ENCODE measurements at regions of chr1 and their contacts with region 1.

Region 1: GRCh38 chr1:109483672-109484518 is at the start of gene ATXN7L2:
- DNase-seq: peak; percentile 96
- ATAC-seq: peak; percentile 77
- H3K4me3 ChIP-seq: peak within 1 kb of the TSS; percentile 51 to 82 (median 74)
- H3K4me3 Mint-ChIP-seq: peak within 1 kb of the TSS; percentile 96
- H3K27ac ChIP-seq: peak within 1 kb of the TSS; percentile 92 to 95
- H3K27ac Mint-ChIP-seq: peak within 1 kb of the TSS; percentile 88
- H3K4me1 ChIP-seq: peaks cover 12 to 23% of the 10 kb centered on the region in 2 donors
- H3K4me1 Mint-ChIP-seq: peaks cover 28% of the 10 kb centered on the region
- H3K27me3 ChIP-seq: peaks cover 0 to 15% (median 5%) of the 10 kb centered on the region in 4 experiments
- H3K27me3 Mint-ChIP-seq: peaks cover 20% of the 10 kb centered on the region
- CTCF ChIP-seq: no peak
- total RNA-seq, gene ATXN7L2: 10.1 and 10.9 TPM in 2 replicates

Region 2: DNA sequence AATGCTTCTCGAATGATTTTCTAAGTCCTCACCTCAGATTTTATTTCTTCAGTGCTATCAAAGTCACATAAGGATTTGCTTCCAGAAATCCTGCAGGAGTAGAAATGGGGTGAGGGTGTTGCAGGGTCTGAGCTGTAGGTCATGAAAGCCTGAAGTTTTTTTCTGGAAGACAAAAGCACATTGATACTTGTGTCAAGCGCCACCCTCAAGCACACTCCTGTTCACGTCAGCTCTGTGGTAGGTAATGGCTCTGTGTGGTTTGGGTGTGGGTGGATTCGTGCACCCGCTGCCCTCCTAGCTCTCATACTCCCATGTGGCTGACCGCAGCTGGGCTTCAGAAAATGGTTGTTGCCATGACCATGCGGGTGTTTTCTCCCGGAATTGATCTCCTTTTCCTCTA is 666.9 kb before region 1 on chr1:
- CTCF ChIA-PET with region 1: no interaction called
- POLR2A ChIA-PET with region 1: no interaction called
- intact Hi-C with region 1: no loop called
- DNase-seq: no peak
- ATAC-seq: no peak
- H3K4me3 ChIP-seq: peak overlapping the region in 1 of 5 experiments; percentile 29
- H3K4me3 Mint-ChIP-seq: no peak overlapping the region
- H3K27ac ChIP-seq: no peak overlapping the region
- H3K27ac Mint-ChIP-seq: no peak overlapping the region
- H3K4me1 ChIP-seq: no peaks in the 10 kb centered on the region
- H3K4me1 Mint-ChIP-seq: no peaks in the 10 kb centered on the region
- H3K27me3 ChIP-seq: no peaks in the 10 kb centered on the region
- H3K27me3 Mint-ChIP-seq: no peaks in the 10 kb centered on the region
- CTCF ChIP-seq: no peak

Region 3: DNA sequence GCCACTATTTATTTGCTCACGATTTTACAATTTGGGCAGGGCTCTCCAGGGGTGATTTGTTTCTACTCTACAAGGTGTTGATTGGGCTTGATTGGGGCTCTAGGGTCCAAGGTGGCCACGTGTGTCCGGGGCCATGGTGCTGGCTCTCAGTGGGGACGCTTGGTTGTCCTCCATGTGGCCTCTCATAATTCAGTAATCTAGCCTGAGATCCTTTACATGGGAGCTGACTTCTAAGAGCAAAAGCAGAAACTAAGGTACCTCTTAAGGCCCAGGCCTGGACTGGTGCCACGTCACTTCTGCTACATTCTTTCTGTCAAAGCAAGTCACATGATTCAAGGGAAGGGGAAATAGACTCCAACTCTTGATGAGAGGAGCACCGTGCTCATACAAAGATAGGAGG is 192.9 kb before region 1 on chr1:
- CTCF ChIA-PET with region 1: no interaction called
- POLR2A ChIA-PET with region 1: no interaction called
- intact Hi-C with region 1: no loop called
- DNase-seq: peak; percentile 37
- ATAC-seq: no peak
- H3K4me3 ChIP-seq: no peak overlapping the region
- H3K4me3 Mint-ChIP-seq: no peak overlapping the region
- H3K27ac ChIP-seq: no peak overlapping the region
- H3K27ac Mint-ChIP-seq: no peak overlapping the region
- H3K4me1 ChIP-seq: peaks cover 20 to 28% of the 10 kb centered on the region in 2 donors
- H3K4me1 Mint-ChIP-seq: peaks cover 28% of the 10 kb centered on the region
- H3K27me3 ChIP-seq: no peaks in the 10 kb centered on the region
- H3K27me3 Mint-ChIP-seq: peaks cover 4% of the 10 kb centered on the region
- CTCF ChIP-seq: no peak

Region 4: DNA sequence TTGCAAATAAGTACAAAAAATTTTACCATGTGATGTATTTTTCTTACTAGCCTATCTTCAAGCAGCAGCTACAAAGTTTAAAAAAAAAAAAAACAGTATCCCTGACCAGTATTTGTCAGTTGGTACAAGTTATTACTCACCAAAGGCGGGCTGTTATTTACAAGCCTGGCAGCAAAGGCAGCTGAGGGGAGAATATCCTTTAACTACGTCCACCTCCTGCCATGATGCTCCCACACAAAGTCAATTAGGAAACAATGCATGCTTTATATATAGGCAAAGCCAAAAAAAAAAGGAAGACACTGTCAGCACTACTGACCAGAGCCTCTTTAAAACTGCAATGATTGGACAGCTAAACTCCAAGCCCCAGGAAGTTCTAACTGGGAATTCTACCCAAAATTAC is 71.3 kb before region 1 on chr1:
- CTCF ChIA-PET with region 1: no interaction called
- POLR2A ChIA-PET with region 1: no interaction called
- intact Hi-C with region 1: no loop called
- DNase-seq: no peak
- ATAC-seq: no peak
- H3K4me3 ChIP-seq: no peak overlapping the region
- H3K4me3 Mint-ChIP-seq: no peak overlapping the region
- H3K27ac ChIP-seq: no peak overlapping the region
- H3K27ac Mint-ChIP-seq: no peak overlapping the region
- H3K4me1 ChIP-seq: no peaks in the 10 kb centered on the region
- H3K4me1 Mint-ChIP-seq: peaks cover 2% of the 10 kb centered on the region
- H3K27me3 ChIP-seq: no peaks in the 10 kb centered on the region
- H3K27me3 Mint-ChIP-seq: no peaks in the 10 kb centered on the region
- CTCF ChIP-seq: no peak

Region 5: GRCh38 chr1:109509176-109510134 is 25.6 kb after region 1 on chr1 and contains the start of gene AMIGO1:
- CTCF ChIA-PET with region 1: no interaction called
- POLR2A ChIA-PET with region 1: interaction called, 6 read pairs
- intact Hi-C with region 1: loop called (anchors 1 kb)
- DNase-seq: peak; percentile 81
- ATAC-seq: peak; percentile 84
- H3K4me3 ChIP-seq: peak within 1 kb of the TSS; percentile 49 to 64 (median 62)
- H3K4me3 Mint-ChIP-seq: peak within 1 kb of the TSS; percentile 92
- H3K27ac ChIP-seq: no peak within 1 kb of the TSS
- H3K27ac Mint-ChIP-seq: peak within 1 kb of the TSS; percentile 37
- H3K4me1 ChIP-seq: peaks cover 11 to 15% of the 10 kb centered on the region in 2 donors
- H3K4me1 Mint-ChIP-seq: peaks cover 18% of the 10 kb centered on the region
- H3K27me3 ChIP-seq: peaks cover 0 to 9% (median 5%) of the 10 kb centered on the region in 4 experiments
- H3K27me3 Mint-ChIP-seq: peaks cover 37% of the 10 kb centered on the region
- CTCF ChIP-seq: no peak
- total RNA-seq, gene AMIGO1: 2.4 and 2.6 TPM in 2 replicates

Region 6: DNA sequence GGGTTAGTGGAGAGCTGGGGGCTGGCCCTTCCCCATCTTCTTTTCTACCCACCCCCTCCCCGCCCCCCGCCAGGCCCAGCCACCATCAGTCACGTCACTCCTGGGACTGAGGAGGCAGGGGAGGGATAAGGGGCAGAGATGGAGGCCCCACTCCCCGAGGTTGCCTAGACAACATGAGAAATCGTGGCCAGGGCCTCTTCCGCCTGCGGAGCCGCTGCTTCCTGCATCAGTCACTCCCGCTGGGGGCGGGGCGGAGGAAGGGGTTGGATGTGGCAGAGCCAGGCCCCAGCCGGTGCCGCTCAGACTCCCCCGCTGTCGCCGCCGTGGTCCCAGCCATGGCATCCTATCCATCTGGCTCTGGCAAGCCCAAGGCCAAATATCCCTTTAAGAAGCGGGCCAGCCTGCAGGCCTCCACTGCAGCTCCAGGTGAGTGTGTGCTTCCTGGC is 137.0 kb after region 1 on chr1:
- CTCF ChIA-PET with region 1: no interaction called
- POLR2A ChIA-PET with region 1: no interaction called
- intact Hi-C with region 1: loop called (anchors 5 kb)
- DNase-seq: peak; percentile 86
- ATAC-seq: peak; percentile 59
- H3K4me3 ChIP-seq: peak overlapping the region; percentile 65 to 94 (median 84)
- H3K4me3 Mint-ChIP-seq: peak overlapping the region; percentile 99
- H3K27ac ChIP-seq: peak overlapping the region; percentile 64 to 90
- H3K27ac Mint-ChIP-seq: peak overlapping the region; percentile 96
- H3K4me1 ChIP-seq: peaks cover 50 to 65% of the 10 kb centered on the region in 2 donors
- H3K4me1 Mint-ChIP-seq: peaks cover 72% of the 10 kb centered on the region
- H3K27me3 ChIP-seq: no peaks in the 10 kb centered on the region
- H3K27me3 Mint-ChIP-seq: no peaks in the 10 kb centered on the region
- CTCF ChIP-seq: no peak

Region 7: DNA sequence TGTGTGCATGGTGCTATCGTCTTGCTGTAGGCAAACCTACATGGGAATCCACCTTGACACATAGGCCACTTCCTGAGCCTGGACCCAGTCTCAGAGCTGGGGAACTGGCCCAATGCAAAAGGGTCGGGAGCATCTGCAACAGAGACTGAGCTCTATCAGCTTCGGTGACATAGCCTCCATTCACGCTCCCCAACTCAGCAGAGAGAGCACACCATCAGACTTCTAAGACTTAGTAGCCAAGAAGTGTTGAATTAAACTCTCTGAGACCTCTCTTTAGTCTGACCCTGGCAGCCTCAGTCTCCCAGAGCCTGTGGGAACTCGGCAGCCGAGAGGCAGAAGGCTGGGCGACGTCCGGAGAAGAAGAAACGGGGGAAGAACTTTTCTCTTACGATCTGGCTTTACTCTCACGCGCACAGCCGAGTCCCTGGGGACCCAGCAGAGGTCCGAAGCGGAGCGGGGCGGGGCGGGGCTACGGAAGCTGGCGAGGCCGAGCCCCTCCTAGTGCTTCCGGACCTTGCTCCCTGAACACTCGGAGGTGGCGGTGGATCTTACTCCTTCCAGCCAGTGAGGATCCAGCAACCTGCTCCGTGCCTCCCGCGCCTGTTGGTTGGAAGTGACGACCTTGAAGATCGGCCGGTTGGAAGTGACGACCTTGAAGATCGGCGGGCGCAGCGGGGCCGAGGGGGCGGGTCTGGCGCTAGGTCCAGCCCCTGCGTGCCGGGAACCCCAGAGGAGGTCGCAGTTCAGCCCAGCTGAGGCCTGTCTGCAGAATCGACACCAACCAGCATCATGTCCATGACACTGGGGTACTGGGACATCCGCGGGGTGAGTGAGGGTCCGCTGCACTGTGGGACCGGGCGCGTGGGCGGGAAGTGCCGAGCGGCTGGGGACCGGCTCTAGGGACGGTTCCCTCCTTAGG is 172.0 kb after region 1 on chr1 and contains the start of gene GSTM4:
- CTCF ChIA-PET with region 1: no interaction called
- POLR2A ChIA-PET with region 1: interaction called, 4 read pairs
- intact Hi-C with region 1: loop called (anchors 10 kb)
- DNase-seq: peak; percentile 90
- ATAC-seq: peak; percentile 96
- H3K4me3 ChIP-seq: peak within 1 kb of the TSS; percentile 45 to 97 (median 90)
- H3K4me3 Mint-ChIP-seq: peak within 1 kb of the TSS; percentile 96
- H3K27ac ChIP-seq: peak within 1 kb of the TSS; percentile 37 to 76
- H3K27ac Mint-ChIP-seq: peak within 1 kb of the TSS; percentile 93
- H3K4me1 ChIP-seq: peaks cover 11 to 17% of the 10 kb centered on the region in 2 donors
- H3K4me1 Mint-ChIP-seq: peaks cover 23% of the 10 kb centered on the region
- H3K27me3 ChIP-seq: peaks cover 0 to 6% (median 0%) of the 10 kb centered on the region in 4 experiments
- H3K27me3 Mint-ChIP-seq: peaks cover 20% of the 10 kb centered on the region
- CTCF ChIP-seq: no peak
- total RNA-seq, gene GSTM4: 28.6 and 39.4 TPM in 2 replicates

Region 8: GRCh38 chr1:110407260-110408210 is 923.6 kb after region 1 on chr1 and contains the start of gene LAMTOR5:
- CTCF ChIA-PET with region 1: no interaction called
- POLR2A ChIA-PET with region 1: no interaction called
- intact Hi-C with region 1: loop called (anchors 5 kb)
- DNase-seq: peak; percentile 94
- ATAC-seq: peak; percentile 92
- H3K4me3 ChIP-seq: peak within 1 kb of the TSS; percentile 76 to 99 (median 90)
- H3K4me3 Mint-ChIP-seq: peak within 1 kb of the TSS; percentile 100
- H3K27ac ChIP-seq: peak within 1 kb of the TSS; percentile 87 to 90
- H3K27ac Mint-ChIP-seq: peak within 1 kb of the TSS; percentile 99
- H3K4me1 ChIP-seq: peaks cover 18 to 23% of the 10 kb centered on the region in 2 donors
- H3K4me1 Mint-ChIP-seq: peaks cover 25% of the 10 kb centered on the region
- H3K27me3 ChIP-seq: no peaks in the 10 kb centered on the region
- H3K27me3 Mint-ChIP-seq: no peaks in the 10 kb centered on the region
- CTCF ChIP-seq: peak; percentile 23
- total RNA-seq, gene LAMTOR5: 145 and 151 TPM in 2 replicates

Measured in B cell (primary cell).